Dendritic cell treated with granulocyte-macrophage colony-stimulating factor and Interleukin-4, amounts not matched to agents 40 ng/mL and 50 ng/mL, for 4 days (primary cell): ENCODE measurements at regions of chr5 and their contacts with region 1.

Region 1: GRCh38 chr5:65102828-65103711 is 334.3 kb downstream of the CWC27 start:
- H3K4me3 Mint-ChIP-seq: peak overlapping the region; percentile 75
- H3K27ac Mint-ChIP-seq: peak overlapping the region; percentile 79
- H3K4me1 Mint-ChIP-seq: peaks cover 27% of the 10 kb centered on the region
- H3K27me3 Mint-ChIP-seq: peaks cover 25% of the 10 kb centered on the region

Region 2: GRCh38 chr5:64965613-64966012 is 137.5 kb before region 1 on chr5:
- intact Hi-C with region 1: loop called (anchors 10 kb)
- H3K4me3 Mint-ChIP-seq: no peak overlapping the region
- H3K27ac Mint-ChIP-seq: no peak overlapping the region
- H3K4me1 Mint-ChIP-seq: peaks cover 5% of the 10 kb centered on the region
- H3K27me3 Mint-ChIP-seq: no peaks in the 10 kb centered on the region